Ovary (tissue), 10 donors: ENCODE measurements at regions of chr11 and their contacts with region 1.

Region 1: DNA sequence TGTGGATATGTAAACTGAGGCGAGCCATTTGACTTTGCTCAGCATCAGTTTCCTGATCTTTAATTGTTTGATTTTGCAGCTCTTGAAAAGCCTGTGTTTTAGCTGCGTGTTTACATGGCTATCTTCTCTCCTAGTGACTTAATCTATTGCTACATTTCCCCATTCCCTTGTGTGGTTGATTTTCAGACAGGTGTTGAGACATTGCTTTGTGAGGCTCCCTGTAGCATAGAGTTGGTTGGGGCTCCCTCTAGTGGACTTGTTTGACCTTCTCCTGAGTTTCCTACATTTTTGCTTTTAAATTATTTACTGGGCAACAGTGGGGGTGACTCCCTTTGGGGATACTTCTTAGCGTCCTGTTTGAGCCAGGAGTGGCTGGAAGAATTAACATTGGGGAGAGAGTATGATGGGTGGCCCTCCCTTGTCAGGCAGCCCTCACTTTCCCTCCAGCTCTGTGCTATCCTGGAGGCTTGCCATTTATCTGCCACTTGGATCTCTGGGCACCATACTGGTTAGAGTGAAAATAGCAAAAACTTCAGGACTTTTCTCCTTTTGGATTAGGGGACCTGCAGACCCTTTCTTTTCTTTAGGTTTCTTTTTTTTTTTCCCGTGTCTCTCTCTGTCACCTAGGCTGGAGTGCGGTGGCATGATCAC is 9.2 kb upstream of the CBL start:
- DNase-seq: peak in 4 of 5 donors; percentile 34 to 75 (median 50)
- H3K4me3 ChIP-seq: no peak overlapping the region
- H3K27ac ChIP-seq: no peak overlapping the region
- H3K4me1 ChIP-seq: no peaks in the 10 kb centered on the region
- H3K27me3 ChIP-seq: no peaks in the 10 kb centered on the region
- CTCF ChIP-seq: peak; percentile 65 to 73 (median 66)
- EP300 ChIP-seq: no peak
- POLR2A ChIP-seq: no peak

Region 2: DNA sequence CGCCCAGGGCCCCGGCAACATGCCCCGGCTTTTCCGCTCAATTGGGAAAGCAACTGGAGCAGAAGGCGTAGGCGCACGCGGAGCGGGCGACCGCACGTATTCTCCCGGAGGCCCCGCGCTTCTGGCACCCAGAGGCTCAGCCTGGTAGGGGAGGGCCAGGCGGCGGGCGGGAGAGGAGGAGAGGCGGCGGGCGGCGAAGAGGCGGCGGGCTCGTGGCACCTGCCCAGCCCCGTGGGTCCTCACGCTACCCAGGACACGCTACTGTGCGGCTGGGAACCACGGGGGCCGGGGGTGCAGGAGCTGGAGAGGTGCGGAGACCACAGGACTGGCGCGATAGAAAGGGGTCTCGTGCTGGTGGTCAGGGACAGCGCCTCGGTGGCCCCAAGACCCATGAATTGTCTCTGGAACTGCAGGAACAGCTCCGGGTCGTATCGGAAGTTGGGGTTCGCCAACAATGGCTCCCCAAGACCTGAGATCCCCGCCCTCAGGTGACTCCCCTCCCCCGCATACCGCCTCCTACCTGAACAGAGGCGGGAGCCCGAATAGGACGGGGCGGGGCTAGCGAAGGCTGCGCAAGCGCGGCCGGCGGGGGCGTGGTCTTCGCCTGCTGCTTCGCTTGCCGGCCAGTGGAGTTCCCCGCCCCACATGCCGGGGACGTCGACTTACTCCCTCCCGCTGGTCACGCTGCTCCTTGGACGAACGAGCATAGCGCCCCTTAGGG is 166.5 kb before region 1 on chr11 and contains the start of gene SLC37A4:
- intact Hi-C with region 1: loop called in 1 of 4 experiments (anchors 10 kb)
- DNase-seq: peak; percentile 96 to 98 (median 98)
- H3K4me3 ChIP-seq: peak within 1 kb of the TSS; percentile 53
- H3K27ac ChIP-seq: peak within 1 kb of the TSS; percentile 18 to 68
- H3K4me1 ChIP-seq: peaks cover 2% of the 10 kb centered on the region
- H3K27me3 ChIP-seq: no peaks in the 10 kb centered on the region
- CTCF ChIP-seq: peak; percentile 78 to 94 (median 92)
- EP300 ChIP-seq: no peak
- POLR2A ChIP-seq: no peak
- total RNA-seq, gene SLC37A4: 11.2 to 38.1 (median 14.8) TPM

Region 3: DNA sequence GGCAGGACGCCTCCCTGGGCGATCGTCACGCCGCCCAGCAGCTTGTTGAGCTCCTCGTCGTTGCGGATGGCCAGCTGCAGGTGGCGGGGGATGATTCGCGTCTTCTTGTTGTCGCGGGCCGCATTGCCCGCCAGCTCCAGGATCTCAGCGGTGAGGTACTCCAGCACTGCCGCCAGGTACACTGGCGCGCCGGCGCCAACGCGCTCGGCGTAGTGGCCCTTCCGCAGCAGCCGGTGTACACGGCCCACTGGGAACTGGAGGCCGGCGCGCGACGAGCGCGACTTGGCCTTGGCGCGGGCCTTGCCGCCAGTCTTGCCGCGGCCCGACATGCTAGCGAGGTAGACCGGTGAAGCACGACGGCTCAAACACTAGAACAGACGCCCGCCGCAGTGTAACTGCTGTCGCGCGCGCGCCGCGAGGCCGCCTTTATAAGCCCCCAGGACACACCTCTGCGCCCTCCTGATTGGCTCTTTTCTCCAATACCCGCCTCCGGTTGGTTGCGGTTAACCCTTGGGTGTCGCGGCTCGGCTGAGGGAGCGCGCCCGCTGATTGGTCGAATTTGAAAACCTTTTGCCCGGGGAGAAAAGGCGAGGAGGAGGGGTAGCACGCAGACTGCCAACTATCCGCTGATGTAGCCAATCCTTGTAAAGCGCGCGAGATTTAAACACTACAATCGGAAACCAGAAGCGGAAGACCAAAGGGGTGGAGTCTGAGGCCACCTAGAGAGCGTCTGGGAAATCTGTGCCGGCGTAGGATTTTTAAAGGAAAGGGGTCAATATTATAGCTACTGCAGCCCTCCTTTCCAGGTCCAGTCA is 101.7 kb before region 1 on chr11:
- intact Hi-C with region 1: loop called in 2 of 4 experiments (anchors 5 to 10 kb)
- DNase-seq: peak; percentile 98 to 99 (median 99)
- H3K4me3 ChIP-seq: peak overlapping the region; percentile 92
- H3K27ac ChIP-seq: peak overlapping the region; percentile 80 to 96
- H3K4me1 ChIP-seq: peaks cover 2% of the 10 kb centered on the region
- H3K27me3 ChIP-seq: no peaks in the 10 kb centered on the region
- CTCF ChIP-seq: peak in 2 of 3 donors; percentile 70 to 85
- EP300 ChIP-seq: no peak
- POLR2A ChIP-seq: peak; percentile 99

Region 4: DNA sequence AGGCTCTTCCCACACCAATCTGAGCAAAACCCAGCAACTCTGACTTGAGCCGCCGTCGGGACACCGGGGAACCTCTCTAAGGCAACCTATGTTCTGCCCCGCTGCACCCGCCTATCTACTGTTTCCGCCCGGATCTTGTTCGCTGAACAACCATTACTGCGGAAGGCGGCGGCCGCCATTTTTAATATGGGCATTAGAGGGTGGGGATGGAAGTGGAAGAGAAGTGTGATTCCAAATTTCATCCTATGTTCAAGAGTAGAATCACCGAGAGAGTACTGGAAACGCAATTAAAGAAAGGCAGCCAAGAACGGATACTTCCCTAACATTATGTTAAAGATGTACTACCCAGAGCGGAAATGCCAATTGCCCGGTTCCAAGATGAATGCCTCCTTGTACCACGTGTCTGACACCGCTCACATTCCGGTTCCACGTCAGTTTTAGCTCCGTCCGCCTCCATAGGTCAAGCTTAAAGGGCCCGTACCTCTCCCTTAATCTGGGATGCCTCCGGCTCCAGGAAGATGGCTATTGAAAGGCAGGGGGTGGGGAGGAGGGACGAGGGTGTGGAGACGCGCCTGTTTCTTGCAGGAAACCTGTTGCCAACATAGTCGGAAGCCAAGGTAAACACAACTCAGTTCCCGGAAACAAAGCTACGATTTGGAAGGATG is 95.1 kb before region 1 on chr11 and contains the start of gene DPAGT1:
- intact Hi-C with region 1: loop called in 2 of 4 experiments (anchors 5 to 10 kb)
- DNase-seq: peak; percentile 87 to 93 (median 88)
- H3K4me3 ChIP-seq: peak within 1 kb of the TSS; percentile 82
- H3K27ac ChIP-seq: peak within 1 kb of the TSS; percentile 76 to 89
- H3K4me1 ChIP-seq: peaks cover 14% of the 10 kb centered on the region
- H3K27me3 ChIP-seq: no peaks in the 10 kb centered on the region
- CTCF ChIP-seq: no peak
- EP300 ChIP-seq: peak; percentile 62
- POLR2A ChIP-seq: no peak
- total RNA-seq, gene DPAGT1: 14.1 to 31.3 (median 24.4) TPM

Region 5: GRCh38 chr11:119134389-119134978 is 62.5 kb before region 1 on chr11:
- intact Hi-C with region 1: no loop called
- DNase-seq: peak in 1 of 5 donors; percentile 30
- H3K4me3 ChIP-seq: no peak overlapping the region
- H3K27ac ChIP-seq: no peak overlapping the region
- H3K4me1 ChIP-seq: no peaks in the 10 kb centered on the region
- H3K27me3 ChIP-seq: no peaks in the 10 kb centered on the region
- CTCF ChIP-seq: no peak
- EP300 ChIP-seq: no peak
- POLR2A ChIP-seq: no peak

Region 6: DNA sequence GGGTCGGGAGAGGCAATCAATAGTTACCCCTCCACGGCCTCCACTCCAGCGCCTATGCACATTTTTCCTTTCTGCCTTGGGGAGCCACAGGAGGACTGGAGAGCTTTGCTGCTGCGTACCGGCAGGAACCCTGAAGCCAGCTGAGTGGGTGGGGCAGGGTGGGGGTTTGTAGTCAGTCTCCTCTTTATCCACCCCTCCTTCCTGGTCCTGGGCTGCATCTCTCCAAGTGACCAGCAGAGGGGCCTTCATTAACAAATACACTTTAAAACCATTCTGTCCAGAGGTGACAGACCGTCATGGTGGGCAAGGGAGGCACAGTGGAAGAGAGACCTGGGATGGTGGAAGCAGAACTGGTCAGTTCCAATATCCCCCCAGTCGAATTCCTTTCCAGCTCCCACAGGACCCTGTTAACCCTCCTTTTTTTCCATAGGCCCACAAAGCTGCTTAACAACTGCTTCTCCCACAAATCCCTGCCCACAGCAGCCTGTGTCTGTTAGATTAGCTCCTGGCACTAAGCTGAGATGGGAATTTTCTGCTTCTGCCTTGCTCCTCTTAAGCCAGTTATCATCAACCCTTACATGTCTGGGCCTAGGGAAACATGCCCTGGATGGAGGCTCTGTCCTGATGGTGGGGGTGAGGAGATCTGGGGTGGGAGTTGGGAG is 52.0 kb before region 1 on chr11:
- intact Hi-C with region 1: no loop called
- DNase-seq: peak in 4 of 5 donors; percentile 26 to 57 (median 50)
- H3K4me3 ChIP-seq: no peak overlapping the region
- H3K27ac ChIP-seq: no peak overlapping the region
- H3K4me1 ChIP-seq: peaks cover 6% of the 10 kb centered on the region
- H3K27me3 ChIP-seq: no peaks in the 10 kb centered on the region
- CTCF ChIP-seq: peak in 2 of 3 donors; percentile 6 to 24
- EP300 ChIP-seq: no peak
- POLR2A ChIP-seq: no peak